ENCODE measurements at regions of chr7 and their contacts with region 1.

Region 1: GRCh38 chr7:88243345-88243909 is 23.6 kb upstream of the SRI start:
- DNase-seq: no peak
- ATAC-seq: peak; percentile 79 to 88

Region 2: DNA sequence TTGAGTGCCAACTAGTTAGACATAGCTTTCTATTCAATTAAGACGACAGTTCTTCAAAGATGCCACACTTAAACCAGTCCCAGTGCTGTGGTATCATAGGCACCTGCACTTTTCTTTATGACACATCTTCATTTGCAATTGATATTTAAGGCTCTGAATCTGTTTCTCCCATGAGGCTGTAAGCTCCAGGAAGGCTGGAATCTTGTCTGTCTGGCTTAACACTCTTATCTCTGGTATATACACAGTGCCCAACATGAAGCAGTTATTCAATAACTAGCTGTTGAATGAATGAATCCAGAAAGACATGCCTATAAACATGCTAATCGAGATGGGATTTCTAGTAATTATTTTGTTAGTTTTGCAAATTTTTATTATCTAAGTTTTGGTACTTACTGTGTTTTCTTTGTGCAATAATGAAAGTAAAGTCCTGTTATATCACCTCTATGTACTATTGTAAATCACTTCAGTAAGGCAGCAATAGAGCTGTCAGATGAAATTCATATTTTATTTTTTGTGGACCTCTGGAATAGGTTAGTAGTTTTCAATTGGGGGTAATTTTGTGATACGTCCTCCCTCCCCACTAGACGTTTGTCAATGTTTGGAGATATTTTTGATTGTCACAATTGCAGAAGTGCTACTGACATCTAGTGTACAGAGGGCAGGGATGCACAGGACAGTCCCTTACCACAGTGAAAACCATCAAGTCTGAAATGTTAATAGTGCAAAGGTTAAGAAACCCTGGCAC is 114.5 kb after region 1 on chr7:
- intact Hi-C with region 1: loop called (anchors 1 to 5 kb)
- DNase-seq: no peak
- ATAC-seq: peak; percentile 61 to 86

Region 3: GRCh38 chr7:88835147-88835728 is 591.8 kb after region 1 on chr7:
- intact Hi-C with region 1: loop called in 1 of 2 experiments (anchors 10 kb)
- DNase-seq: no peak
- ATAC-seq: no peak